Activated CD8-positive, alpha-beta memory T cell treated with anti-CD3 and anti-CD28 coated beads, Interleukin-2, amount 10 ng/mL, durations not matched to agents 7 days and 5 days (primary cell): ENCODE measurements at regions of chr6 and their contacts with region 1.

Region 1: DNA sequence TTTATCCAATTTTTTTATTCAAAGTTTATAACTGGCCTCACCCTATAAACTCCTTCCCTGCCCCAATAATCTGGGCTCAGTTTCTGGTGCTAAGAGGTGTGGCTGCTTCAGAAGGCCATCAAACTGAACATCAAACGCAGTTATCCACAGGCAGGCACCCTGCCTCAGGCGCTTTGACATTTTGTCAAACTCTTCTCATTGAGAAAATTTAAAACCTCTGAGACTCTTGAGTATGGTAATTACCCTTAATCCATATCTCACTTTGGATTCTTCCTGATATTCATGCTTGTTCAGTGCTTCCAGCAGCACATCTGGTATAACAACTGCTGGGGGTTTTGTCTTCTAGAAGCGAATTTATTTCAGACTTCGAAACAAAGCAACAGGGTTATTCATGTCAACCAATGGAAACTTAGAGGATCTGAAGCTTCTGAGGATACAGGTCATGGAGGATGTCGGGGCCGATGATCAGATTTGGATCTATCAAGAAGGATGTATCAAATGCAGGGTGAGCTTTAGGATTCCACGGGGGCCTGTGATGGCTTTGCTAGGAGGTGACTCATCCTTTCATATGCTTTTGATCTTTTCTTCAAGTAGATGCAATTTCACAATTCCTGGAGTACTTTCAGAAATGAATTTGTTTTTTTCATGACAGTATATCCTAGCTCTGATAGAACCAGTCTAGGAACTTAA is 68.2 kb downstream of the RTN4IP1 start:
- DNase-seq: no peak
- ATAC-seq: no peak
- H3K4me3 Mint-ChIP-seq: no peak overlapping the region
- H3K27ac Mint-ChIP-seq: no peak overlapping the region
- H3K4me1 Mint-ChIP-seq: peaks cover 6% of the 10 kb centered on the region
- H3K27me3 Mint-ChIP-seq: no peaks in the 10 kb centered on the region

Region 2: DNA sequence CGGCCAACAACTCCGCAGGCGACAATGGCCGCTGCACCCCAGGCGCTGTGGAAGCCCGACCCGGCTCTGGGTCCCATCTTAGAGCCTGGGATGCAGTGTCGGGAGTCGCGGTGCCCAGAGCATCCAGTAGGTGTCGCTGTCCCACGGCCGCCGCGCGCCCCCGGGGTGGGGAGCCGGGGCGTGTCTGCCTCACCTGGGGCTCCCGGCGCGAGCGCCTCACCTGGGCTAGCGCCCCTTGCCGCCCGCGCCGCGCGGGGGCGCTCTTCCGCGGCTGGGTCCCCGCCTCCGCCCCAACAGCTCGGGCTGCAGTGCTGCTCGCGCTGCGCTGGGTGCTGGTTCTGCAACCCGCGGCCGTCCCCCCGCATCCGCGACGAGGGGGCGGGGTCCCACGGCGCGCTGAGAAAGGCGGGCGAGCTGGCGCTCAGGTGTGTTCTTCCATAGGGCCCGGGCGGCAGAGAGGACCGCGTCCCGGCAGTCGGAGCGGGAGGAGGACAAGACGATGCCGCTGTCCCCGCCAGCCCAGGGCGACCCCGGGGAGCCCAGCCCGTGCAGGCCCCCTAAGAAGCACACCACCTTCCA is 200.6 kb before region 1 on chr6 and contains the start of gene CRYBG1:
- CTCF ChIA-PET with region 1: interaction called, 10 read pairs
- DNase-seq: peak; percentile 70
- ATAC-seq: peak; percentile 94
- H3K4me3 Mint-ChIP-seq: peak within 1 kb of the TSS; percentile 65
- H3K27ac Mint-ChIP-seq: no peak within 1 kb of the TSS
- H3K4me1 Mint-ChIP-seq: peaks cover 10% of the 10 kb centered on the region
- H3K27me3 Mint-ChIP-seq: peaks cover 63% of the 10 kb centered on the region
- total RNA-seq, gene CRYBG1: 44.1 to 62.7 TPM

Region 3: DNA sequence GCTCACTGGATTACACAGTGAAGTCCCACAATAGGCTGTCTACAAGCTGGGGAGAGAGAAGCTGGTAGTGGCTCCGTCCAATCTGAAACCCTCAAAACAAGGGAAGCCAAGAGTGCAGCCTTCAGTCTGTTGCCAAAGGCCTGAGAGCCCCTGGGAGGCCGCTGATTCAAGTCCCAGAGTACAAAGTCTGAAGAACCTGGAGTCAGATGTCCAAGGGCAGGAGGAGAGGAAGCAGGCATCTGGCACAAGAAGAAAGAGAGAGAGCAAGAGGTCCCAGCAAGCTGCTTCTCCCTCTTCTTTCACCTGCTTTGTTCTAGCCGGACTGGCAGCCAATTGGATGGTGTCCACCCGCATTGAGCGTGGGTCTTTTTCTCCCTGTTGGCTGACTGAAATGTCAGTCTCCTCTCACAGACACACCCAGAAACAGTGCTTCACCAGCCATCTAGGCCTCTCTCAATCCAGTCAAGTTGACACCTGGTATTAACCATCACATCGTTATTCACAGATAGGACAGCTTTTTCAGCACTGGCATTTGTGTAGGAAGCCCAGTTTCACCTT is 149.4 kb before region 1 on chr6:
- CTCF ChIA-PET with region 1: no interaction called
- DNase-seq: no peak
- ATAC-seq: no peak
- H3K4me3 Mint-ChIP-seq: no peak overlapping the region
- H3K27ac Mint-ChIP-seq: no peak overlapping the region
- H3K4me1 Mint-ChIP-seq: peaks cover 3% of the 10 kb centered on the region
- H3K27me3 Mint-ChIP-seq: peaks cover 48% of the 10 kb centered on the region

Region 4: GRCh38 chr6:106451439-106451838 is 109.7 kb before region 1 on chr6:
- CTCF ChIA-PET with region 1: interaction called, 32 read pairs
- DNase-seq: no peak
- ATAC-seq: no peak
- H3K4me3 Mint-ChIP-seq: no peak overlapping the region
- H3K27ac Mint-ChIP-seq: no peak overlapping the region
- H3K4me1 Mint-ChIP-seq: peaks cover 13% of the 10 kb centered on the region
- H3K27me3 Mint-ChIP-seq: no peaks in the 10 kb centered on the region

Region 5: GRCh38 chr6:106512048-106512967 is 48.8 kb before region 1 on chr6:
- CTCF ChIA-PET with region 1: interaction called, 29 read pairs
- DNase-seq: peak; percentile 89
- ATAC-seq: peak; percentile 70
- H3K4me3 Mint-ChIP-seq: peak overlapping the region; percentile 94
- H3K27ac Mint-ChIP-seq: peak overlapping the region; percentile 96
- H3K4me1 Mint-ChIP-seq: peaks cover 50% of the 10 kb centered on the region
- H3K27me3 Mint-ChIP-seq: no peaks in the 10 kb centered on the region